ENCODE measurements at regions of chr1 and their contacts with region 1.

Region 1: GRCh38 chr1:43991476-43992231 is at the start of gene CCDC24:
- DNase-seq: peak; percentile 85 to 96
- H3K4me3 ChIP-seq: peak within 1 kb of the TSS; percentile 59
- H3K27ac ChIP-seq: peak within 1 kb of the TSS; percentile 86
- H3K4me1 ChIP-seq: peaks cover 25% of the 10 kb centered on the region
- H3K27me3 ChIP-seq: no peaks in the 10 kb centered on the region
- CTCF ChIP-seq: no peak
- total RNA-seq, gene CCDC24: 47.9 and 56.5 TPM in 2 replicates

Region 2: GRCh38 chr1:43979528-43980254 is 12.0 kb before region 1 on chr1:
- CTCF ChIA-PET with region 1: interaction called, 3 read pairs
- POLR2A ChIA-PET with region 1: interaction called, 9 read pairs
- intact Hi-C with region 1: loop called (anchors 1 kb)
- DNase-seq: peak; percentile 35 to 65
- H3K4me3 ChIP-seq: peak overlapping the region; percentile 81
- H3K27ac ChIP-seq: peak overlapping the region; percentile 38; the same call in 1 of the 2 replicates
- H3K4me1 ChIP-seq: peaks cover 45% of the 10 kb centered on the region
- H3K27me3 ChIP-seq: no peaks in the 10 kb centered on the region
- CTCF ChIP-seq: no peak

Region 3: GRCh38 chr1:44144962-44145756 is 153.5 kb after region 1 on chr1:
- CTCF ChIA-PET with region 1: interaction called, 14 read pairs
- POLR2A ChIA-PET with region 1: no interaction called
- intact Hi-C with region 1: no loop called
- DNase-seq: no peak
- H3K4me3 ChIP-seq: no peak overlapping the region
- H3K27ac ChIP-seq: no peak overlapping the region
- H3K4me1 ChIP-seq: no peaks in the 10 kb centered on the region
- H3K27me3 ChIP-seq: no peaks in the 10 kb centered on the region
- CTCF ChIP-seq: no peak

Measured in PC-9 (cell line).